GM10248 (cell line): ENCODE measurements at regions of chr7 and their contacts with region 1.

Region 1: GRCh38 chr7:37320501-37321468 is 127.9 kb downstream of the ELMO1 start:
- DNase-seq: no peak
- CTCF ChIP-seq: no peak

Region 2: GRCh38 chr7:36852017-36852416 is 468.8 kb before region 1 on chr7:
- CTCF ChIA-PET with region 1: no interaction called
- POLR2A ChIA-PET with region 1: no interaction called
- DNase-seq: no peak
- CTCF ChIP-seq: no peak

Region 3: GRCh38 chr7:37336259-37336658 is 15.5 kb after region 1 on chr7:
- CTCF ChIA-PET with region 1: interaction called, 27 read pairs
- POLR2A ChIA-PET with region 1: interaction called, 4 read pairs
- DNase-seq: peak; percentile 77
- CTCF ChIP-seq: no peak